Right ventricle myocardium inferior (tissue), 1 donor: ENCODE measurements at regions of chr18 and their contacts with region 1.

Region 1: GRCh38 chr18:28167835-28168349 is 9.0 kb downstream of the CDH2 start:
- DNase-seq: no peak
- ATAC-seq: no peak

Region 2: DNA sequence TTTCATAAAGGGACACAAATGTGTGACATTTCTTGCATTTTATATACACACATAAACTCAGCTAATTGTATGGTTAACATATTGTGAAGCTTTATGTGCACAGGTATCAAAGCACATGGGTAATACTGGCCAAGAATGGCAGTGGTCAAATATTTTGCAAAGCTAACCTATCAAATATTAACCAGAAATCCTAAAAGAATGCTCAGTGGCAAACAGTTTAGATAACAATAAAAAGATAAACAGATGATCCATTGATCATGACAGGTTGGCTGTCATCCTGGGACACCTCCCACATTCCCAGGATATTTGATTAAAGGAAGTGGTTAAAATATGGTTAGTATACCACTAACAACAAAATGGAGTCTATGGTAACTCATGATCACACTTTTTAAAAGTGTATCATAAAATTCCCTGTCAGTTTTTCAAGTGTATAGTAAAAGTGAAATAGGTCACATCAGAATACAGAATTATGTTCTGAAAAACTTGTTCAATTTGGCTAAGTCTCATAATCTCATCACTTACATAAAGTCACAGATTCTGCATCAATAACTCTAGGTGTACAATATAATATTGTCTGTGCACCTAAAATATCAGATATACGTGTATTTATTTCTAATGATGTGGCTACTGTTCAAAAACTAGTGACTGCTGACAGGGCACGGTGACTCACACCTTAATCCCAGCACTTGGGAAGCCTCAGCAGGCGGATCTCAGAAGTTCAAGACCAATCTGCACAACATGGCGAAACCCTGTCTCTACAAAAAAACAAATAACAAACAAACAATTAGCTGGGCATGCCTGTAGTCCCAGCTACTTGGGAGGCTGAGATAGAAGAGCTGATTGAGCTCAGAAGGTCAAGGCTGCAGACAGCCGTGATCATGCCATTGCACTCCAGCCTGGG is 39.9 kb before region 1 on chr18:
- intact Hi-C with region 1: loop called (anchors 1 kb)
- DNase-seq: no peak
- ATAC-seq: peak; percentile 27